ENCODE measurements at regions of chr12 and their contacts with region 1.

Region 1: DNA sequence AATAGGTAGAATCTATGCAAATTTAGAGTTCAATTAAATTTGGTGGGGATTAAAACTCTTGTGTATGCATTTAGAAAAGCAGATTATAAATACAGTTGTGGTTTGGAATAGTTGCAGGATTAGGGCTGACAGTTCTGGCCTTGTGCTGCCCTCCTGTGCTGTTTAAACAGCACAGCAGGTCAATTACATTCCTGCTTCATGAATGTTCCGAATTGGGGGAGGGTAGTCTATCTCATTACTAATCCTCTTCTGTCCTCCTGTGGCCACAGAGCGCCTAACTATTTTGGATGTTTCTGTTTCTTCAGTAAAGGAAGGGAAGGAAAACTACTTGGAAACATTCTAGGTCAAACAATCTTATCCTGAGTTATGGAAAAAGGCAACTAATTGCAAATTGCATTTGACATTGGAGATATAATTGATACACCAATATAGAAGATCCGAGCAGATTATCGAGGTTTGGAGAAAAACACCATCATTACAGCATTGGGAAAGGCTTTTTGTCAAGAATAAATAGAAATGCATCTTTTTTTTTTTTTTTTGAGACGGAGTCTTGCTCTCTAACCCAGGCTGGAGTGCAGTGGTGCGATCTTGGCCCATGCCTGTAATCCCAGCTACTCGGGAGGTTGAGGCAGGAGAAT is 8.7 kb upstream of the GPR19 start:
- DNase-seq: peak; percentile 92
- H3K4me3 Mint-ChIP-seq: no peak overlapping the region
- H3K27ac Mint-ChIP-seq: no peak overlapping the region
- H3K4me1 Mint-ChIP-seq: peaks cover 11% of the 10 kb centered on the region
- H3K27me3 Mint-ChIP-seq: no peaks in the 10 kb centered on the region
- CTCF ChIP-seq: peak; percentile 98

Region 2: DNA sequence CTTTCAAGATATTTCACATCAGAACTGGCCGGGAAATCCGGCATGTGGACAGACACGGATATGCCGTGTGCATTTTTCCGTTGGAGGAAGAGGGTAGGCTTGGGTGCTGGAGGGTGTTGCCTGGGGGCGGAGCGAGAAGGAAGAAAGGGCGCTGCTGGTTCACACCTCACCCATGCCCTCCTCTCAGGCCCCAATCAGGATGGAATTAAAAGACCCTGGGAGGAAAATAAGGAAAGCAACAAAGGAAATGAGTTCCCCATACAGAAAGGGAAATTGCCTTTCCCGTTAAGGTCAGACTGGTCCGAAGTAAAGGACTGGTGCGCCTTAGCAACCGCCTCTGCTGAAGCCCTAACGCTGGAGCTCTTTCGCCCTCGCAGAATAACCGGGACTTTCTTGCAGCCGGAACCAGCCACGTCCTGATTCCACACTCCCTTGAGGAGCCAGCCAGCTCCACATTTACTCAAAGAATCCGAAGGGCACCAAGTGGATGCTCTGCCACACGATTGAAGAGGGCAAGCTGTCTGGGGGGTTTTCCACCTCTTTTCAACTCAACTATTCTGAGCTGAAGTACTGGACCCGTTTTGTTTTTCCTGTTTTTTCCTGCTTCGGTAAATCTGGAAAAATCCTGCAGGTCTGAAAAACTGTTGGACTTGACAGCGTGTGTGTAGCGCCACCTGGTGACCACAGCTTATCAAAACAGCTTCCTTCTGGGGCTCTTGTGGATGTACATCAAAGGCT is 671.7 kb before region 1 on chr12:
- CTCF ChIA-PET with region 1: interaction called, 3 read pairs
- POLR2A ChIA-PET with region 1: interaction called, 3 read pairs
- intact Hi-C with region 1: loop called (anchors 1 kb)
- DNase-seq: peak; percentile 84
- H3K4me3 Mint-ChIP-seq: no peak overlapping the region
- H3K27ac Mint-ChIP-seq: no peak overlapping the region
- H3K4me1 Mint-ChIP-seq: peaks cover 5% of the 10 kb centered on the region
- H3K27me3 Mint-ChIP-seq: no peaks in the 10 kb centered on the region
- CTCF ChIP-seq: peak; percentile 85

Region 3: GRCh38 chr12:12356886-12357718 is 347.6 kb before region 1 on chr12 and contains the start of gene BORCS5:
- CTCF ChIA-PET with region 1: interaction called, 22 read pairs
- POLR2A ChIA-PET with region 1: interaction called, 4 read pairs
- intact Hi-C with region 1: no loop called
- DNase-seq: peak; percentile 98
- H3K4me3 Mint-ChIP-seq: peak within 1 kb of the TSS; percentile 91
- H3K27ac Mint-ChIP-seq: peak within 1 kb of the TSS; percentile 94
- H3K4me1 Mint-ChIP-seq: no peaks in the 10 kb centered on the region
- H3K27me3 Mint-ChIP-seq: no peaks in the 10 kb centered on the region
- CTCF ChIP-seq: no peak
- total RNA-seq, gene BORCS5: 11.0 and 15.3 TPM in 2 replicates

Region 4: GRCh38 chr12:12562585-12563261 is 142.0 kb before region 1 on chr12 and contains the start of gene DUSP16:
- CTCF ChIA-PET with region 1: interaction called, 6 read pairs
- POLR2A ChIA-PET with region 1: interaction called, 4 read pairs
- intact Hi-C with region 1: loop called (anchors 2 kb)
- DNase-seq: peak; percentile 94
- H3K4me3 Mint-ChIP-seq: peak within 1 kb of the TSS; percentile 69
- H3K27ac Mint-ChIP-seq: peak within 1 kb of the TSS; percentile 95
- H3K4me1 Mint-ChIP-seq: peaks cover 28% of the 10 kb centered on the region
- H3K27me3 Mint-ChIP-seq: no peaks in the 10 kb centered on the region
- CTCF ChIP-seq: no peak
- total RNA-seq, gene DUSP16: 18.9 and 20.7 TPM in 2 replicates

Region 5: DNA sequence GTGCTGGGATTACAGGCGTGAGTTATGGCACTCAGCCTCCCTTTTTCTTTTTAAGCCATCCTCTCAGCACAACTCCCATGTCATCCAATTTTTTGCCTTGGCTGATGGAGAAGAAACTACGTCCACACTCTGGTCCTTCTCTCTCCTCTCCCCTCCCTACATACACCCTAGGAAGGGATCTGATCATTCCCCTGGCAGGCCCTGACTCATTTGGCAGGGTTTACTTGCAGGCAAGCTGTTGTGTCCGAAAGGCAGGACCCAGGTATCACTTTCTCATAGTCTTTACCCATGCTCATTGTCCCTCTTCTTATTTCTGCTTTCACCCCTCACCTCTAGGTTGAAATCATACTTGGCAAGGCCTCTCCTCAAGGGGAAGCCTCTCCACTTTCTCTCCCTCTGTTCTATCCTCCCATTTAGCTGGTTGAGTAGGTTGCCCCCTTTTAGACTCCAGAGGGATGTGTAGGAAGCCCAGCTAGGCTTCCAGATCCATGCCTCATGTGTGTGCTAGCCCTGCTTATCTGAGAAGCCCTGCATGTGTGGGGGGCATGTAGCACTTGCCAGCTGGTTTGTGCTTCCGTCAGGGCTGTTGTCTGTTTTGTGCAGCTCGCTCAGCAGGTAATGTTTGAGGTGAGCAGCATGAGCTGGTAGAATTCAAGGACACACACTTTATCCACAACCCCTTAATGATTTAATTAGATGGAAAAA is 23.5 kb before region 1 on chr12:
- CTCF ChIA-PET with region 1: interaction called, 11 read pairs
- POLR2A ChIA-PET with region 1: no interaction called
- intact Hi-C with region 1: no loop called
- DNase-seq: no peak
- H3K4me3 Mint-ChIP-seq: no peak overlapping the region
- H3K27ac Mint-ChIP-seq: no peak overlapping the region
- H3K4me1 Mint-ChIP-seq: no peaks in the 10 kb centered on the region
- H3K27me3 Mint-ChIP-seq: no peaks in the 10 kb centered on the region
- CTCF ChIP-seq: no peak

Region 6: DNA sequence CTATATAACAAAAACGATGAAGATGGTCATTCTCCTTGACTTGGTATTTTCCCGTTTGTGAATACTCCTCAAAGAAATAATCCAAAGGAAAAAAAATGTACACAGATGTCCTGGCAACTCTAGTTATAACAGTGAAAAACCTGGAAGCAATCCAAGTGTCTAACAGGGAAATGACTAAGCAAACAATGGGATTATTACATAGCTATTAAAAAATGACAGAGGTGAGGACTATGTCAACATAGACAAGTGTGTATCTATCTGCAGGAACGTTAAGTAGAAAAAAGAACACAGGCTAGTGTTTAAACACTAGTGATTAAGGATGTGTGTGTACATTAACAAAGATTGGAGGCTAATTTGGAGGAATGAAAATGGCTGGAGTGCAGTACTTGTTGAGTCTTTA is 74.8 kb after region 1 on chr12:
- CTCF ChIA-PET with region 1: no interaction called
- POLR2A ChIA-PET with region 1: no interaction called
- intact Hi-C with region 1: no loop called
- DNase-seq: peak; percentile 88
- H3K4me3 Mint-ChIP-seq: no peak overlapping the region
- H3K27ac Mint-ChIP-seq: peak overlapping the region; percentile 44
- H3K4me1 Mint-ChIP-seq: peaks cover 26% of the 10 kb centered on the region
- H3K27me3 Mint-ChIP-seq: no peaks in the 10 kb centered on the region
- CTCF ChIP-seq: no peak